ENCODE measurements at regions of chr19 and their contacts with region 1.

Region 1: GRCh38 chr19:56547535-56547934 is 8.8 kb downstream of the ZFP28 start:
- DNase-seq: no peak
- ATAC-seq: no peak
- H3K4me3 Mint-ChIP-seq: no peak overlapping the region
- H3K27ac Mint-ChIP-seq: no peak overlapping the region
- H3K4me1 Mint-ChIP-seq: no peaks in the 10 kb centered on the region
- H3K27me3 Mint-ChIP-seq: no peaks in the 10 kb centered on the region
- CTCF ChIP-seq: no peak

Region 2: GRCh38 chr19:56393119-56394012 is 154.2 kb before region 1 on chr19 and contains the start of gene ZNF582:
- CTCF ChIA-PET with region 1: no interaction called
- POLR2A ChIA-PET with region 1: no interaction called
- intact Hi-C with region 1: loop called (anchors 10 kb)
- DNase-seq: peak; percentile 97
- ATAC-seq: peak; percentile 99
- H3K4me3 Mint-ChIP-seq: peak within 1 kb of the TSS; percentile 90
- H3K27ac Mint-ChIP-seq: peak within 1 kb of the TSS; percentile 96
- H3K4me1 Mint-ChIP-seq: peaks cover 15% of the 10 kb centered on the region
- H3K27me3 Mint-ChIP-seq: no peaks in the 10 kb centered on the region
- CTCF ChIP-seq: peak; percentile 81
- total RNA-seq, gene ZNF582: 2.0 to 2.4 TPM

Measured in activated CD8-positive, alpha-beta T cell treated with anti-CD3 and anti-CD28 coated beads for 36 hours (primary cell).